Left ventricle myocardium inferior (tissue), 1 donor: ENCODE measurements at regions of chr6 and their contacts with region 1.

Region 1: DNA sequence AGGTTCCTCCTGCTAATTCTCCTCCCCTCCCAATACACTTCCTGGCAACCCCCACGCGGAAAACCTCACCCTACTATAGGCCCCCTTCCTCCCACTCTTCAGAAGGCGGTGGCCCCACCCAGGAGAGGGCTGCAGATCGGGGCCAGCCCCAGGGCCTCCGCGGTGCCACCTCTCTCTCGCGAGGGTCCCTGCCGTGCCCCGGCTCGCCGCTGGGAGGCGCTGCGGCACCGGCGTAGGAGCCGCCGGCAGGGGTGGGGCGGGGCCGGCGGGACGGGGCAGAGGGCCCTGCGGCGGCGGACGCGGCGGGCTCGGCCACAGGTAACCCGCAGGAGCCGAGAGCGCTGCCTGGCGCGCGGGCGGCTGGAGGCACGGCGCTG is at the start of gene ANKRD6:
- DNase-seq: peak; percentile 79
- H3K4me3 ChIP-seq: peak within 1 kb of the TSS; percentile 93
- H3K27ac ChIP-seq: peak within 1 kb of the TSS; percentile 42
- H3K4me1 ChIP-seq: peaks cover 30% of the 10 kb centered on the region
- H3K27me3 ChIP-seq: no peaks in the 10 kb centered on the region
- CTCF ChIP-seq: peak; percentile 91
- total RNA-seq, gene ANKRD6: 11.1 TPM

Region 2: DNA sequence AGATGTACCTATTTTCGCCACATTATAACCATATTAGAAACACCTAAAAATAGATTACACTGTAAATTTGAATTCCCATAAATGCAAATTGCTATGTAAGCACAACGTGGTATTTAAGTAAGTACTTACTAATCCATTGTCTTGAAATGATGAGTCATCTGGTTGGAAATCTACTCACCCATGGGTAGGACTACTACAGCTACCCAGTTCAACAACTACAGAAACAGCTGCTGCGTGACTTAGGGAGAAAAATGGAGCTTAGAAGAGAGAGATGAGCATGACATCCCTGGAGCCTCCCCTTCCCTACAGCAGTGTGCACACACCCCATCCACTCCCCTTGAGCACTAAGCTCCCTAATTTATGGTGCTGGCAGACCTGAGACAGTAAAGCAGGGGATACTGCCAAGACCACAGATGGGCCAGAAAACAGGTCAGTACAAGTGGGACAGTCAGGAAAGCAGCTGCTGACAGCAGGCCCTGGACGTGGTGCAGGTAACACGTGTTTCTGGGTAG is 47.7 kb before region 1 on chr6:
- intact Hi-C with region 1: no loop called
- DNase-seq: no peak
- H3K4me3 ChIP-seq: no peak overlapping the region
- H3K27ac ChIP-seq: no peak overlapping the region
- H3K4me1 ChIP-seq: peaks cover 20% of the 10 kb centered on the region
- H3K27me3 ChIP-seq: no peaks in the 10 kb centered on the region
- CTCF ChIP-seq: no peak

Region 3: DNA sequence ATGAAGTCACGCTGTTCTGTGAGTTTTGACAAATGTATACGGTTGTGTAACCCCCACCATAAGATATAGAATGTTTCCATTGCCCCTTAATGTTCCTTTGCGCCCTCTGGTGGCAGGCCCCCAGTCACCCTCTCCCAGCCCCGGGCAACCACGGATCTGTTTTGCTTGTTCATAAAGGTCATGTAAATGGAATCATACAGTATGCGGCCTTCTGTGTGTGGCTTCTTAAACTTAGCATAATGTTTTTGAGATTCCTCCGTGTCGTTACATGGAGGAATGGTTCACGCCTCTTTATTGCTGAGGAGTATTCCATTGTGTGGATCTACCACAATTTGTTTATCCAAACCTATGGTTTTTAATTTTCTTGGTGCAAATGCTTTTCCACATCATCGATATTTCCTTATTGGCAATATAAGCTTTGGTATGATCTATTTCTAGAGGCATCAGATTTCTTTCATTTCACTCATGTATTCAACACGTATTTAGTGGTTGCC is 177.3 kb after region 1 on chr6:
- intact Hi-C with region 1: loop called (anchors 5 kb)
- DNase-seq: peak; percentile 69
- H3K4me3 ChIP-seq: no peak overlapping the region
- H3K27ac ChIP-seq: no peak overlapping the region
- H3K4me1 ChIP-seq: peaks cover 3% of the 10 kb centered on the region
- H3K27me3 ChIP-seq: no peaks in the 10 kb centered on the region
- CTCF ChIP-seq: peak; percentile 88

Region 4: GRCh38 chr6:89638320-89639195 is 205.7 kb after region 1 on chr6 and contains the start of gene LYRM2:
- intact Hi-C with region 1: no loop called
- DNase-seq: peak; percentile 95
- H3K4me3 ChIP-seq: peak within 1 kb of the TSS; percentile 80
- H3K27ac ChIP-seq: peak within 1 kb of the TSS; percentile 96
- H3K4me1 ChIP-seq: peaks cover 28% of the 10 kb centered on the region
- H3K27me3 ChIP-seq: no peaks in the 10 kb centered on the region
- CTCF ChIP-seq: peak; percentile 45
- total RNA-seq, gene LYRM2: 41.3 TPM